Left colon (tissue), 2 donors: ENCODE measurements at regions of chrX and their contacts with region 1.

Region 1: DNA sequence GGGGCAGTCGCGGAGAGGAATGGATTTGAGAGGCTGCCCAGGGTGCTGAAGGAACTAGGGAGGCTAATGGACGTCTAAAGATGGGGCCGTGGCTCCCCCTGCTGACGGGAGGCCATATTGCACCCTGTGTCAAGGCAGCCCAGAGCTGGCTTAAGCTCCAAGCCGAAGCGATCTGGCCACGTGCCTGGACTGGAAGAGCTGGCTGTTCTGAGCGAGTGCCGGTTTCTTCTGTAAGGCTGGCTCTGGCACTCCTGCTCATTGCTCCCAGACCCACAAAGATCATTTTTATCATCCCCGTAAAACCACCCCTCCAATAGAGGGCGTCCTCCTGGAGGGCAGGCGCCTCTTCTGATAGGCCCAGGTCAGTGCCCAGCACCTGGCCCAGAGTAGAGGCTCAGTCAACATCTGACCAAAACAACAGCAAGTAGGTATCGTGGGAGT is 5.6 kb downstream of the PNCK start:
- DNase-seq: peak; percentile 70 to 86
- ATAC-seq: peak; percentile 83

Region 2: DNA sequence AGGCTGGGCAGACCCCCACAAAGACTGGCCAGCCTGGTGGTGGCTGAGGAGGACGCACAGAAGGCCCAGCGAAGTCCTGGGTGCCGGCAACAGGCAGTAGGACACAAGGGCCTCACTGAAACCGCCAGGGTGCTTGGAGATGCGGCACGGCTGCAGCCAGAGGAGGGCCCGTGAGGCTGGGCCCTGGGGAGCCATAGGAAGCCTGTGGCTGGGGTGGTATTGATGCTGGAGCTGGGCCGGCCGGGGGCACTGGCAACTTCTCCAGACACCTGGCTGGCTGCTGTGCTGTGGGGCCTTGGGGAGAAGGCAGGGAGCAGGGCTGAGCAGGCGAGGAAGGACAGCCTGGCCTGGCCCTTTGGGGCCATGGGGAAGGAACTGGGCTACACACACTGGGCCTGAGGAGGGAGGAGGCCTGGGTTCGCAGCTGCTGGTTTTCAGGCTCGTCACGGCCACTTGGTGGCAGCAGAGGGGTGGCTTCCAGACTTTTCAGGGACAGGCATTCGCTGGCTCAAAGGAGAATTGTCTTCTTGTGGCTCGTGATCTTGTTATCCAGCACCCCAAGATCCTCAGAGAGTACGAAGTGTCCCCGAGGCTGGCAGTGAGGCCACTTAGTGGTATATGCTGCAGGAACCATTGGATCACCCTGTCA is 113.3 kb before region 1 on chrX:
- intact Hi-C with region 1: loop called in 1 of 2 experiments (anchors 10 kb)
- DNase-seq: peak; percentile 43 to 76
- ATAC-seq: peak; percentile 84

Region 3: GRCh38 chrX:153763989-153764755 is 96.2 kb after region 1 on chrX and contains the start of gene PLXNB3:
- intact Hi-C with region 1: no loop called
- DNase-seq: peak; percentile 79 to 88
- ATAC-seq: peak; percentile 94
- total RNA-seq, gene PLXNB3: 1.0 to 5.4 TPM